Vagina (tissue), 2 donors: ENCODE measurements at regions of chr15 and their contacts with region 1.

Region 1: DNA sequence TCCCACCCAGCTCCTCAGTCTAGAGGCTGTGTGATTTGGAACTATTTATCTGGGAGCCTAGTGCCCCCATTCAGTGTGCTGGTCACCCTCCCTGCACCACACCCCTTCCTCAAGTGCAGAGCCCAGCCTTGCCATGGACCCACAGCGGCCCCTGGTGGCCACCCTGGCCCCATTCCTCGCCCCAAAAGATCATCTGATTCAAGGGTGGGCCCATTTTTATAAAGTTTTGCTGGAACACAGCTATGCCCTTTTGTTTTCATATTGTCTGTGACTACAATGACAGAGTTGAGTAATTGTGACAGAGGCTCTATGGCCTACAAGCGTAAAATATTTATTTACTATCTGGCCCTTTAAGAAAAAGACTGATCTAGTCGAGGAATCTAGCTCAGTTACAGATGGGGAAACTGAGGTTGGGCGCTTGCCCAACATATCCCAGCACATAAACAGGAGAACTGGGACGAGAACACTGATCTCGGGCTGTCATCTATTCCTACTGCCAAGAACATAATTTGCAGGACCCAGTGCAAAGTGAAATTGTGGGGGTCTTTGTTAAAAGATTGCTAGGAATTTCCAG is 1.8 kb downstream of the FES start:
- DNase-seq: no peak
- H3K4me3 ChIP-seq: peak overlapping the region; percentile 57 to 72
- H3K27ac ChIP-seq: peak overlapping the region; percentile 97
- H3K4me1 ChIP-seq: peaks cover 36% of the 10 kb centered on the region
- H3K27me3 ChIP-seq: no peaks in the 10 kb centered on the region
- CTCF ChIP-seq: peak; percentile 92 to 98 (median 98)
- POLR2A ChIP-seq: no peak

Region 2: GRCh38 chr15:90648137-90649070 is 237.7 kb before region 1 on chr15:
- intact Hi-C with region 1: loop called (anchors 2 kb)
- DNase-seq: peak in 1 of 2 donors; percentile 93
- H3K4me3 ChIP-seq: no peak overlapping the region
- H3K27ac ChIP-seq: peak overlapping the region; percentile 77
- H3K4me1 ChIP-seq: peaks cover 10% of the 10 kb centered on the region
- H3K27me3 ChIP-seq: no peaks in the 10 kb centered on the region
- CTCF ChIP-seq: peak; percentile 89 to 95 (median 92)
- POLR2A ChIP-seq: no peak

Region 3: DNA sequence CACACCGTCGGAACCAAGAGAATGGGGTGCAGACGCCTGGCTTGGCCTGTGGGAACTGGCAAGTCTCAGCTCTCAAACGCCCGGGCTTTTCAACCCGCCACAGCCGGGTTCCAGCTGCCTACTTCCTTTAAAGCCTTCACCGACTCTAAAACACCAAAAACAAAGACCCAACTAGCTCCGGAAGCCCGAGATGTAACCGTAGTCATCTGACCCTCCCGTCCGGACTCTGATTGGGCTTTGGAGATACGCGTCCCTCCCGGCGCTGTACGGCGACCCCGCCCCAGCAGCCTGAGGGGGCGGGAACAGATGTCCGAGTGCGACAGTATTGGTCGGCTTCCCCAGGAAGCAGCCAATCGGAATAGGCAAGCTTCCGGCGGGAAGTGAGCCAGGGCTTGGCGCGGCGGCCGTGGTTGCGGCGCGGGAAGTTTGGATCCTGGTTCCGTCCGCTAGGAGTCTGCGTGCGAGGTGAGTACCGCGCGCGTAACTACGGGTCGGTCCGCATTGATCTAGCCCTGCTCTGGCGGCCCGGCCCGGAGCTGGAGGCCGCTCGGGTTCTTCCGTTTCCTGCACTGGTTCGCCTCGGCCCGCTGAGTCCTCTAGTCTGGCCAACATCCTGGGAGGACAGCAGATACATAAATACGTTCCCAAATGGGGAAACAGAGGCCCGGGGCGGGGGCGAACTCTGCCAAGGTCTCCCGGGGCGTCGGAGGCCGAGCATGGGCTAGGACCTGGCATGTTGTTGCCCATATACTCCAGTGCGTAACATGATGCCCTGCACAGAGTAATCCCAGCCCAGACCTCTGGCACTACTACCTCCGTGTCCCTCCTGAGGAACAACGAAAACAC is 168.9 kb before region 1 on chr15 and contains the start of gene BLM:
- intact Hi-C with region 1: loop called (anchors 10 kb)
- DNase-seq: peak; percentile 97 to 98
- H3K4me3 ChIP-seq: peak within 1 kb of the TSS; percentile 72
- H3K27ac ChIP-seq: peak within 1 kb of the TSS; percentile 85
- H3K4me1 ChIP-seq: peaks cover 16% of the 10 kb centered on the region
- H3K27me3 ChIP-seq: no peaks in the 10 kb centered on the region
- CTCF ChIP-seq: peak in 2 of 3 experiments; percentile 1 to 55
- POLR2A ChIP-seq: peak in 1 of 2 donors; percentile 38
- total RNA-seq, gene BLM: 1.7 TPM

Region 4: DNA sequence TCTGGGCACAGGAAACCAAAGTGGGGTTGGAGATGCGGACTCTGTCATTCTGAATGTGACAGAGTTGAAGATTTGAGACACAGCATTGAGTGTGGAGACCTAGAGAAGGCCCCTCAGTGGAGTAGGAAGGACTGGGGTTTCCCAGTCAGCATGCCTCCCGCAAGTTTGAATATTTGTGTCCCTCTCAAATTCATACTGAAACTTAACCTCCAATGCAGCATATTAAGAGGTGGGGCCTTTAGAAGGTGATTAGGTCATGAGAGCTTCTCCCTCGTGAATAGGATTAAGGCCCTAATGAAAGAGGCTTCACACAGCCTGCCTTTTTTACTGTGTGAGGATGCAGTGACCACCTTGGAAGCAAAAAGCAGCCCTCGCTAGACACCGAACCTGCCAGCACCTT is 38.2 kb after region 1 on chr15:
- intact Hi-C with region 1: no loop called
- DNase-seq: no peak
- H3K4me3 ChIP-seq: no peak overlapping the region
- H3K27ac ChIP-seq: no peak overlapping the region
- H3K4me1 ChIP-seq: no peaks in the 10 kb centered on the region
- H3K27me3 ChIP-seq: no peaks in the 10 kb centered on the region
- CTCF ChIP-seq: no peak
- POLR2A ChIP-seq: no peak

Region 5: DNA sequence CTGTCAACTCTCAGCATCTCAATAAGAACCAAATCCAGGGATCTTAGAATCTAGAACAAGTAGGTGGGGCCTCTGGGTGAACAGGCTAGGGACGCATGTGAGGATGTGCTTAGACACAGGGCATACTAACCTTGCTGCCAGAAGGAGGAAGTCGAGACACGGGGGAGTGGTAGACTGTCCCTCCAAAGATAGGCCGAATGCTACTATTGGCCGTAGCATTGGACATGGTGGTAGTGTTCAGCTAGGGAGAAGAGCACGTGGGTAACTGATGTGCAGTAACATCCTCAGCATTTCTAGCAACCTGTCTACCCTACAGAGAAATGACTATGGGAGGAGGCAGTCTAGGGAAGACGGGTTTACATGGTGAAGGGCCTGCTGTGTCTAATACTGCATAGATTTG is 84.1 kb after region 1 on chr15:
- intact Hi-C with region 1: no loop called
- DNase-seq: no peak
- H3K4me3 ChIP-seq: no peak overlapping the region
- H3K27ac ChIP-seq: no peak overlapping the region
- H3K4me1 ChIP-seq: no peaks in the 10 kb centered on the region
- H3K27me3 ChIP-seq: no peaks in the 10 kb centered on the region
- CTCF ChIP-seq: no peak
- POLR2A ChIP-seq: no peak